ENCODE measurements at regions of chr12 and their contacts with region 1.

Region 1: GRCh38 chr12:125315771-125316170 is 250.5 kb downstream of the AACS start:
- DNase-seq: no peak
- H3K4me3 ChIP-seq: no peak overlapping the region
- H3K27ac ChIP-seq: no peak overlapping the region
- H3K4me1 ChIP-seq: no peaks in the 10 kb centered on the region
- H3K27me3 ChIP-seq: peaks cover 0 to 53% (median 0%) of the 10 kb centered on the region in 4 donors
- CTCF ChIP-seq: no peak
- EP300 ChIP-seq: no peak
- POLR2A ChIP-seq: no peak

Region 2: DNA sequence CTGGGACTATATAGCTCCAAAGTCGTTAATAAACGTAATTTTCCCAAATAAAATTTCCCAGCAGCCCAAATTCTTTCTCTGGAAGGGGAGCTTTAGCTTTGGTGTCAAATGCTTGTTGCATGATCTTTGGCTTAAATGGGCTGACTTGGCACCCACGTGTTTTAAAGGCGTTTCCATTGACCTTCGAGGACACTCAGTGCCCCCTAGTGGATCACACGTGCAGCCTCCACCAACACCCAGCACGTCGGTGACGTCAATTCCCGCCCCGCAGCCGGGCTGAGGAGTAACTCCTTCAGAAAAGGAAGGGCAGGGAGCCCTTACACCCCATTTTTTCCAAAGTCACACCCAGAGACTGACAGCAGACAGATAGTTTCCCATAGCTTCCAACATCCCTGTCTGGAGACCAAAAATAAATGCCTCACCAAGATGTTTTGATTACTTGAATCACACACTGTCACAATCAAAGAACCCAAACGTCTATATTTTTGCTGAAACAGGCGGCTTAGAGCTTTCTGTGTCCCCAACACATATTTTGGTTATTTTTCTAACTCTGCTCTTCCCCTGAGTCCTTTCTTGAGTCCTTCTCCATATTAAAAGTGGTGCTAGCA is 457.4 kb after region 1 on chr12:
- intact Hi-C with region 1: loop called (anchors 5 kb)
- DNase-seq: no peak
- H3K4me3 ChIP-seq: no peak overlapping the region
- H3K27ac ChIP-seq: no peak overlapping the region
- H3K4me1 ChIP-seq: no peaks in the 10 kb centered on the region
- H3K27me3 ChIP-seq: no peaks in the 10 kb centered on the region
- CTCF ChIP-seq: peak in 1 of 3 experiments; percentile 30
- EP300 ChIP-seq: no peak
- POLR2A ChIP-seq: no peak

Measured in esophagus muscularis mucosa (tissue), 4 donors.